A673 (cell line): ENCODE measurements at regions of chr11 and their contacts with region 1.

Region 1: DNA sequence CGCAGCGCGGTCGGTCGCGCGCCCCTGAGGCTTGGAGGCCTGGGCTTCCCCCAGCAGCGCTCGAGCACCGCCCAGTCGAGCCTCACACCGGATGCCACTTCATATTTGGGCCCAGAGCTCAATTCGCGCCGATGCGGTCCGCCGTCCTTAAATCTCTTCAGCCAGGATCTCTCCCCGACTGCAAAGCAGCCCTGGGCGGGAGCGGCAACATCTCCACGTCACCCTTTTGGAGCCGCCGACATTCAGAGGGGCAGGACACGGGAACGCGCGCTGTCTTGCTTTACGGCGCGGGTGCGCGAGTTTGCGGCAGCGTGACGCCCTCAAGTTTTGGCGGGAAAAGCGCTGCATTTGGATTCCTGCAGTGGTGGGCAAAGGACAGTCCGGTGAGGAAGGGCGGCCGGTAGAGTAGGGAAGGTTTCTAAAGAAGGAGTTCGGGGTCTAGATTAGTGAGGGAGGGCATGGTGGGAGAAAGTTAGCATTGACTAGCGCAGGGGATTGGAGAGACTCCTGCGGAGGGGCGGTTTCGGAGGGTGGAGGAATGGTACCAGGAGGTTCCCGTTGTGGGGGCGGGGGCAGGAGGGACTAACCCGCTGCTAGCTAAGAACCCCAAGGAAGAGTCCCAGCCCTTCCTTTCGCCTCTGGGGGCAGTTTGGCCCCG is 796 bp downstream of the CHEK1 start:
- DNase-seq: peak; percentile 97
- H3K4me3 ChIP-seq: peak overlapping the region; percentile 59
- H3K27ac ChIP-seq: peak overlapping the region; percentile 90
- H3K4me1 ChIP-seq: peaks cover 19% of the 10 kb centered on the region
- H3K27me3 ChIP-seq: no peaks in the 10 kb centered on the region
- CTCF ChIP-seq: no peak

Region 2: GRCh38 chr11:125592305-125593112 is 33.2 kb before region 1 on chr11 and contains the start of gene STT3A:
- CTCF ChIA-PET with region 1: no interaction called
- POLR2A ChIA-PET with region 1: no interaction called
- intact Hi-C with region 1: loop called (anchors 1 kb)
- DNase-seq: peak; percentile 100
- H3K4me3 ChIP-seq: peak within 1 kb of the TSS; percentile 75
- H3K27ac ChIP-seq: peak within 1 kb of the TSS; percentile 92
- H3K4me1 ChIP-seq: peaks cover 15% of the 10 kb centered on the region
- H3K27me3 ChIP-seq: no peaks in the 10 kb centered on the region
- CTCF ChIP-seq: no peak
- total RNA-seq, gene STT3A: 240 and 278 TPM in 2 replicates

Region 3: DNA sequence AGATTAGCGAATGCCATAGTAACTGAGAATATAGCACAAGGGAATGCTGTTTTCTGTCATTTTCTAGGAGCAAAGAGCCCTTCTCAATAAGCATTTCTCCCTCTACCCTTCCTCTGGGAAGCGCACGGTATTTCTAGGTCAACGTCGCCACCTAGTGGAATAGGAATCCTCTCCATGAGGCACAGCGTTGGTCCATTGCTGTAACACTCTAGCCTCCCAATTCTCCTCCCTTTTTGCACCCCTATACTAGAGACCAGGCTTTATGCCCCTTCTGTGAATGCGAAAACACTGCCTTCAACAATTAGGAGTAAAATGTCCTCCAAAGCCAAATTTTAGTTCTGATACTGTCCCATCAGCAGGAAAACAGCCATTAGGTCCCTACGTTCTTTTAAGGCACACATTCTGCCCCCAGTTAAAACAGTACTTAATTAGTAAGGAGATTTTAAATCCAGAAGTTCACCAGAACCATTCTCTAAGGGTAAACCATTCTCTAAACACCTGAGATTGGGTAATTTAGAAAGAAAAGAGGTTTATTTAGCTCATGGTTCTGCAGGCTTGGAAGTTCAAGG is 248.9 kb after region 1 on chr11:
- CTCF ChIA-PET with region 1: no interaction called
- POLR2A ChIA-PET with region 1: no interaction called
- intact Hi-C with region 1: loop called (anchors 2 kb)
- DNase-seq: peak; percentile 87
- H3K4me3 ChIP-seq: no peak overlapping the region
- H3K27ac ChIP-seq: no peak overlapping the region
- H3K4me1 ChIP-seq: no peaks in the 10 kb centered on the region
- H3K27me3 ChIP-seq: no peaks in the 10 kb centered on the region
- CTCF ChIP-seq: peak; percentile 88

Region 4: GRCh38 chr11:125887373-125888324 is 261.9 kb after region 1 on chr11 and contains the start of gene HYLS1:
- CTCF ChIA-PET with region 1: no interaction called
- POLR2A ChIA-PET with region 1: no interaction called
- intact Hi-C with region 1: loop called (anchors 1 kb)
- DNase-seq: peak; percentile 96
- H3K4me3 ChIP-seq: peak within 1 kb of the TSS; percentile 84
- H3K27ac ChIP-seq: peak within 1 kb of the TSS; percentile 91
- H3K4me1 ChIP-seq: peaks cover 12% of the 10 kb centered on the region
- H3K27me3 ChIP-seq: no peaks in the 10 kb centered on the region
- CTCF ChIP-seq: 0 out of 2 replicates have a peak, but pooled peaks have one; percentile 26
- total RNA-seq, gene HYLS1: 16.3 and 18.8 TPM in 2 replicates

Region 5: DNA sequence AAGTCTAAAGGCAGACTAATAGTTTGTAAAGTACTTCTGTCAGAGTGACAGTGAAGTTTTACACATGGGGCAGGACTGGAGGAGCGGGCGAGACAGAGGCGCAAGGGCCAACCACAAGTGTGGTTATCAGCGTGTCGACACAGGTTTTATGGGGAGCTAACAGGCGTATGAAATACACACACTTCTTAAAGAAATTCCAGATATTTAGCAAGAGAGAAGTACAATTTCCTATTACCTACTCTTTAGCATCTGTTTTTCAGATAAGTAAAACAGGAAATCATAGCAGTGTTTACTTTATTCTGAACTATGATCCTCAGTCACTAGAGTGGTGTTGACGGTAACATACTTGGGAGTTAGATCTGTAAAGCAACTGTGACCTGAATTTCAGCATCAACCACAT is 342.6 kb after region 1 on chr11:
- CTCF ChIA-PET with region 1: no interaction called
- POLR2A ChIA-PET with region 1: no interaction called
- intact Hi-C with region 1: no loop called
- DNase-seq: no peak
- H3K4me3 ChIP-seq: no peak overlapping the region
- H3K27ac ChIP-seq: no peak overlapping the region
- H3K4me1 ChIP-seq: peaks cover 5% of the 10 kb centered on the region
- H3K27me3 ChIP-seq: no peaks in the 10 kb centered on the region
- CTCF ChIP-seq: no peak